Activated CD8-positive, alpha-beta T cell treated with anti-CD3 and anti-CD28 coated beads for 36 hours (primary cell): ENCODE measurements at regions of chr9 and their contacts with region 1.

Region 1: DNA sequence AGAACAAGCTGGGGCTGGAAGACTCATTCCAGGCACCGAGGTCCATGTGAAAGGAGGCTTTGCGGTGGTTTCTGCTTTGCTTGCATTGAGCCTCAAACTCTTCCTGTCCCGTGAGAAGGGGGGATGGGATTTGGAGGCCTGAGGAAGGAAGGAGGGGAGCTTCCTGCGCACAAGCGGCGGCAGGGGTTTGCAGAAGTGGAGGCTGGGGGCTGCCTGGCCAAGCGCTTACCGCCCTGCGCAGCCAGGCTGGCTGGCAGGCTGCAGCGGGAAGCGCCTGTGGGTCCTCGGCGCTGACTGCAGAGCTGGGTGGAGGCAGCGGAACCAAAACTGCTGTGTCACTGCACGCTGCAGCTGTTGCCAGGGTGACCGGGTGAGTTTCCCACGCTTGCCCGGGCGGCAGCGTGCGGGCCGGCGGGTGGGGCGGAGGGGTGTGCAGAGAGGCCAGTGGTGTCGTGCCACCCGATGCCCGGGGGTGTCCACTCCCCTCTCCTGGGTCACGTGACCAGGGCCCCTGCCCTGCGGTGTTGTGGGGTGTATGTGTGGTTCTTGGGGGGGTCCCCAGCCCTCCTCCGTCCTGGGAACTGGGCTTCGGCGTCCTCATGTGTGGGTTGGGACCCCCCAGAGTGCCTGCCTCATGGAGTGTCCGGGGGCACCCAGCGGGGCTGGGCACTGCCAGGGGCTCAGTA is 81.0 kb downstream of the RXRA start:
- DNase-seq: peak; percentile 88
- ATAC-seq: peak; percentile 83
- H3K4me3 Mint-ChIP-seq: peak overlapping the region; percentile 45
- H3K27ac Mint-ChIP-seq: no peak overlapping the region
- H3K4me1 Mint-ChIP-seq: peaks cover 42% of the 10 kb centered on the region
- H3K27me3 Mint-ChIP-seq: peaks cover 1% of the 10 kb centered on the region
- CTCF ChIP-seq: no peak

Region 2: GRCh38 chr9:134391314-134392231 is 15.7 kb before region 1 on chr9:
- CTCF ChIA-PET with region 1: interaction called, 10 read pairs
- POLR2A ChIA-PET with region 1: interaction called, 28 read pairs
- intact Hi-C with region 1: no loop called
- DNase-seq: peak; percentile 92
- ATAC-seq: peak; percentile 57
- H3K4me3 Mint-ChIP-seq: peak overlapping the region; percentile 77
- H3K27ac Mint-ChIP-seq: peak overlapping the region; percentile 99
- H3K4me1 Mint-ChIP-seq: peaks cover 65% of the 10 kb centered on the region
- H3K27me3 Mint-ChIP-seq: peaks cover 4% of the 10 kb centered on the region
- CTCF ChIP-seq: no peak

Region 3: GRCh38 chr9:134427153-134427782 is 20.0 kb after region 1 on chr9:
- CTCF ChIA-PET with region 1: no interaction called
- POLR2A ChIA-PET with region 1: no interaction called
- intact Hi-C with region 1: no loop called
- DNase-seq: no peak
- ATAC-seq: no peak
- H3K4me3 Mint-ChIP-seq: no peak overlapping the region
- H3K27ac Mint-ChIP-seq: no peak overlapping the region
- H3K4me1 Mint-ChIP-seq: no peaks in the 10 kb centered on the region
- H3K27me3 Mint-ChIP-seq: no peaks in the 10 kb centered on the region
- CTCF ChIP-seq: no peak

Region 4: DNA sequence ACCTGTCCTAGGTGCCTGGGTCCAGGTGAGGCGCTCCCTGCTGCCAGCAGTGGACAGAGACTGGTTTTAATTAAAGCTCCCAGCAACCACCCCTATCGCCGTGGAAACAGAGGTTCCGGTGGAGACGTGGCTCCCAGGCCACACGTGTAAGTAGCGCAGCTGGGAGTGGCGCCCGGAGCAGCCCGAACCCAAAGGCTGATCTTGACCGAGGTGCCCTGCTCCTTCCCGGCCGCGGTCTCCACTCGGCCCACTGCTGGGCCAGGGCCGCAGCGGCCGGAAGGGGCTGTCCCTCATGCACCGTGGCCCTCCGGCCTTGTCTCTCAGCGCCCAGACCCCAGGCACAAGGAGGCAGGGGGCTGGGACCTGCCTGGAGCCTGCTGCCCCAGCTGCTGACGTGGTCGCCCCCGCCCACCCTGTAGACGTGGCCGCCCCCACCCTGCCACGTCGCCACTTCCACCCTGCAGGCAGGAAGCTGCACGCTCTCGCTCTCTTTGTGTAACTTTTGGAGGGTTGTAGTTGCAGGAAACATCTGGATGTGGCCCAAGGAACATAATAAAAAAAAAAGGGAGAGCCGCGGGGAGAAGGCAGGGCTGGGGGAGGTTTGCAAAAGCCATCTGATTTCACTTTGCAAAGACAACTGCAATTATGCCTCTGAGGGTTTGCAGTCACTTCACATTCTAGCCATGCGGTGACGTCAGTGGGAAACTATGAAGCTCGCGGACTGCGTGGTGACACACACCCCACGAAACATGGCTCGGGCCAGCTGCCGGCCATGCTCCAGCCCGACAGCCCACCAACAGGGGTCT is 48.9 kb after region 1 on chr9:
- CTCF ChIA-PET with region 1: no interaction called
- POLR2A ChIA-PET with region 1: no interaction called
- intact Hi-C with region 1: no loop called
- DNase-seq: peak; percentile 87
- ATAC-seq: peak; percentile 88
- H3K4me3 Mint-ChIP-seq: peak overlapping the region; percentile 72
- H3K27ac Mint-ChIP-seq: peak overlapping the region; percentile 97
- H3K4me1 Mint-ChIP-seq: peaks cover 16% of the 10 kb centered on the region
- H3K27me3 Mint-ChIP-seq: no peaks in the 10 kb centered on the region
- CTCF ChIP-seq: no peak